Sigmoid colon (tissue), 7 donors: ENCODE measurements at regions of chr1 and their contacts with region 1.

Region 1: DNA sequence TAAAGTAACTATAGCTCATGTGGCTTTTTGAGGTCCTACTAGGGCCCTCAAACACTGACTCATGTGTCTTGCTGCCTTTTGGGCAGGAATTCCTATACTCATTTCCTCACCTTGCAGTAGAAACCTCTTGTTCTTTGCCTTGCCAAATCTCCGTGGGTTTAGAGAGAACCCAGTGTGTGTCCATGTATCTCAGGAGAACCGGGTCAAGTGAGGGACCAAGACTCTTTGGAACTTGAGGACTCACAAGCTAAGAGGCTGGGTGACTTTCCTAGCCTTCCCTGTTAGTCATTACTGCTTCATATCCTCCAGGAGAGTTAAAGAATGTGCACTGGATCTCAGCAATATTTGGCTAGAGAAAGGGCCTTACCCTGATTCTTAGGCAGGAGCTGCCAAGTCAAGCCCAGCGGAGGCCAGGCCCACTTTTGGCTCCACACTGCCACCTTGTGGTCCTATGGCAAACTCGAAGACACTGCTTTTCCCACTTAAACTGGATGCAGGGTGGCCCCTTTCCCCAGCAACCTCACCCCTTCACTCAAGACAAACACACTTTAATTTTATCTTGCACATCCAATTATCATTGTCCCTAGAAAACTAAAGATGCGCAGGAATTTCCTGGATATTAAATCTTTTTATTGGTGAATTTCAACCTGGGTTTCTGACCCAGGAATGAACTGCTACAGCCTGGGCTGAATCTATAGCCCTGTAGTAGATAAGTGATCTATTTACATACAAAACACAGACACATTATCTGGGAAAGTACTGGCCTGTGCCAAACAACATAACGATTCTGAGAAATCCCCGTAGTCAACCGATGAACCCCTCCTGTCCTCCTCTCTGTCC is 10.6 kb downstream of the AVPR1B start:
- DNase-seq: peak; percentile 87
- H3K4me3 ChIP-seq: no peak overlapping the region
- H3K27ac ChIP-seq: no peak overlapping the region
- H3K4me1 ChIP-seq: no peaks in the 10 kb centered on the region
- H3K27me3 ChIP-seq: no peaks in the 10 kb centered on the region
- CTCF ChIP-seq: peak; percentile 31 to 79 (median 75)
- EP300 ChIP-seq: no peak
- POLR2A ChIP-seq: no peak

Region 2: DNA sequence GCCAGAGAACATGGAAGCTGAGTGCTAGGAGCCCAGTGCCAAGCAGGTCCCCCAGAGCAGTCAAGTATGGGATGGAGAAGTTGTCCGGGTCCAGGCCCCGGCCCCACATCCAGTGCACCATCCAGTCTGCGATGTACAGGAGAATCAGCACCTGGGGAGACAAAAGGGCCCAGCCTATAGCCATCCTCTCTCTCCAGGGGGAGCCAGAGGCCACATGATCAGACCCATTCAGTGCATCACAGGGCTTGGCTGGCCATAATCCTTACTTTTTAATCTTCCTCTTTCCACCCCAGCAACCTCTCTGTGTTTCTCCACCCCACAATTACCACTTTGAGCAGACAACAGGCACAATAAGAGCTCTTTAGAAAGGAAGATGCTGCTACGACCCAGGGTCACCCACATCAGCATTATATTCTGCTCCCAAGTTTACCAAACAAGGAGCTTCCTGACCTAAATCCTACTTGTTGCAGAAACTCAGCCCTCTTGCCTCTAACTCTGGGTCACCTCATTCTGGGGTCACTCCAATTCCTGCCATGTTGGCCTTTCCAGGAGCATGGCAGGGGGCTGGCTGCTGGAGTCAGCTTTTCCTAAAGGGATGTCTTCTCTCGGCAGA is 314.9 kb before region 1 on chr1:
- intact Hi-C with region 1: loop called (anchors 5 kb)
- DNase-seq: no peak
- H3K4me3 ChIP-seq: no peak overlapping the region
- H3K27ac ChIP-seq: no peak overlapping the region
- H3K4me1 ChIP-seq: no peaks in the 10 kb centered on the region
- H3K27me3 ChIP-seq: no peaks in the 10 kb centered on the region
- CTCF ChIP-seq: peak; percentile 19 to 80 (median 60)
- EP300 ChIP-seq: no peak
- POLR2A ChIP-seq: no peak

Region 3: GRCh38 chr1:205870236-205870635 is 236.3 kb before region 1 on chr1:
- intact Hi-C with region 1: no loop called
- DNase-seq: no peak
- H3K4me3 ChIP-seq: no peak overlapping the region
- H3K27ac ChIP-seq: no peak overlapping the region
- H3K4me1 ChIP-seq: no peaks in the 10 kb centered on the region
- H3K27me3 ChIP-seq: no peaks in the 10 kb centered on the region
- CTCF ChIP-seq: no peak
- EP300 ChIP-seq: no peak
- POLR2A ChIP-seq: no peak

Region 4: GRCh38 chr1:205919026-205919746 is 187.4 kb before region 1 on chr1:
- intact Hi-C with region 1: loop called (anchors 1 kb)
- DNase-seq: peak; percentile 82
- H3K4me3 ChIP-seq: no peak overlapping the region
- H3K27ac ChIP-seq: no peak overlapping the region
- H3K4me1 ChIP-seq: peaks cover 0 to 4% (median 0%) of the 10 kb centered on the region in 4 donors
- H3K27me3 ChIP-seq: no peaks in the 10 kb centered on the region
- CTCF ChIP-seq: peak; percentile 66 to 94 (median 83)
- EP300 ChIP-seq: no peak
- POLR2A ChIP-seq: no peak

Region 5: DNA sequence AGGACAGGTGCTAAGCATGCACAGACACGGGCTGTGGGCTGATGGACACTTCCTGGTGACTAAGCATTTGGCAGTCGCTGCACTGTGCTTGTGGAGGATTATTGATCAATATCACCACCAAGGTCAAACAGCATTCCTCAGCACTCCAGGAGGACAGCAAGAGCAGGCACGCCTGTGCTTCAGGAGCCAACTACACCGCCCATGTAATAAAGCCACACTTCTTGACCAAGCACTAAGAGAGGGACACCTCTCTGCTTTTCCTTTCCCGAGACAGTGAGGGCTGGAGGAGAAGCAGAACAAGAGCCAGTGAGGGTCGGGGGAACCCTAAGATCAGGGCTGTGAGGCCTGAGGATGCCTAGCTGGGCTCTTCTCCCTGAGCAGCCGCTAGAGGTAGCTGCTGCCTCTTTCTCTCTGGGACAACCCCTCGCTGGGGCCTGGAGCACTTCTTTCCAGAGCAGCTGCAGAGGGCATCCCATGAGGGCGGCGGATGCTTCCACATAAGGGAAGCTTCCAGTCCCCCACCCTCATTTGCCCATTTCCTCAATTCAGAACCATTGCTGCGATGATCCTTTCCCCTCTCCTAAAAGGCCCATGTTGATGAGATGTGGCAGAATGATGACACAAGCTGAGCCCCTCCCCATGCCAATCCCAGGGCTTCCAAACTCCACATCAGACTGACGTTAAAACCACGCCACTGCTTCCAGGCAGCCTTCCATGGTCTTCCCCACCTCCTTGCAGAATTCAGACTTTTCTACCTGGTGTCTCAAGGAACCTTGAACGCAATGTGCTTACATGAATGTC is 122.4 kb before region 1 on chr1:
- intact Hi-C with region 1: loop called (anchors 5 kb)
- DNase-seq: peak; percentile 72
- H3K4me3 ChIP-seq: no peak overlapping the region
- H3K27ac ChIP-seq: no peak overlapping the region
- H3K4me1 ChIP-seq: no peaks in the 10 kb centered on the region
- H3K27me3 ChIP-seq: no peaks in the 10 kb centered on the region
- CTCF ChIP-seq: peak in 2 of 4 experiments; percentile 46 to 50
- EP300 ChIP-seq: no peak
- POLR2A ChIP-seq: no peak

Region 6: GRCh38 chr1:206030714-206031113 is 75.8 kb before region 1 on chr1:
- intact Hi-C with region 1: loop called (anchors 1 kb)
- DNase-seq: peak; percentile 73
- H3K4me3 ChIP-seq: no peak overlapping the region
- H3K27ac ChIP-seq: no peak overlapping the region
- H3K4me1 ChIP-seq: no peaks in the 10 kb centered on the region
- H3K27me3 ChIP-seq: peaks cover 0 to 5% (median 0%) of the 10 kb centered on the region in 3 donors
- CTCF ChIP-seq: peak in 3 of 4 experiments; percentile 54 to 62 (median 57)
- EP300 ChIP-seq: no peak
- POLR2A ChIP-seq: no peak

Region 7: DNA sequence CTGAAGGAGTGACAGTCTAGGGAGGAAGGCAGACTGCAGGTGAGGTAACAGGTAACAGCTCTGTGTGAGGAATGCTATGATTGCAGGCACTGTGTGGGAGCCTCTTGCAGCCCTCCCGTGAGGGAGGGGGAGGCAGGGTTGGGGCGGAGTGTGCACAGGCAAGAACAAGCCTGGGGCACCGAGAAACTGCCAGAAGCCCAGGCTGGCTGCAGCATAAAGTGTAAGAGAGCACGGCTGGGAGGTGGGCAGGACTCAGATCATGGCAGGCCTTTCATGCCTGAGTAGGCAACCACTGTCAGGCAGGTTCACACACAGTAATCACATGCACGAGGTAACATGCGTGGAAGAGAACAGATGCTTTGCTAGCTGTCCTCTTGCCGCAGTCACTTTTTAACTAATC is 64.9 kb before region 1 on chr1:
- intact Hi-C with region 1: no loop called
- DNase-seq: no peak
- H3K4me3 ChIP-seq: no peak overlapping the region
- H3K27ac ChIP-seq: no peak overlapping the region
- H3K4me1 ChIP-seq: no peaks in the 10 kb centered on the region
- H3K27me3 ChIP-seq: peaks cover 0 to 24% (median 0%) of the 10 kb centered on the region in 3 donors
- CTCF ChIP-seq: no peak
- EP300 ChIP-seq: no peak
- POLR2A ChIP-seq: no peak

Region 8: DNA sequence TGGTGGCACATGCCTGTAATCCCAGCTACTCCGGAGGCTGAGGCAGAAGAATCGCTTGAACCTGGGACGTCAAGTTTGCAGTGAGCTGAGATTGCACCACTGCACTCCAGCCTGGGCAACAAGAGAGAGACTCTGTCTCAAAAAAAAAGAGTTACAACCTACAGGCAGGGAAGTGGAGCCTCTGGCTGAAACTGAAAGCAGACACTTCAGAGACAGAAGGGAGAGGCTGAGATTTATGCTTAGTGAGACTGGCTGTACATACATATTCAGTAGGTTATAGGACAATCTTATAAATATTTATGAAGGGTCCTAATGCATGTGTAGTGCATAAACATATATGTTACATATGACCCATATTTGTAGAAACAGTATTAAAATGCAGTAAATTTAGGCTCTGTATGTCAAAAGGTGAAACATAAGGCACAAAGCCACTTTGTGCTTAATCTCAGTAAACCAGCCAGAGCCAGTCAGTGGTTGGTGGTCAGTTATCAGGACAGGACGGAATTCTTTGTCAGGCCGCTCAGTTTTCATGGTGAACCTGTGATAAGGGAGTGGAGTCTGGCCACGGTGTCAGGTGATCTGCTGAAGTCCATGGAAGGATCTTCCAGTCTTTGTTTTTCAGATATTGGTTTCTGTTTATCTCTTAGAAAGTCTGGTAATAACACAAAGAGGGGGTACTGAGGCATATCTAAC is 39.9 kb before region 1 on chr1:
- intact Hi-C with region 1: no loop called
- DNase-seq: no peak
- H3K4me3 ChIP-seq: no peak overlapping the region
- H3K27ac ChIP-seq: no peak overlapping the region
- H3K4me1 ChIP-seq: peaks cover 0 to 6% (median 0%) of the 10 kb centered on the region in 4 donors
- H3K27me3 ChIP-seq: no peaks in the 10 kb centered on the region
- CTCF ChIP-seq: no peak
- EP300 ChIP-seq: no peak
- POLR2A ChIP-seq: no peak